H1 (cell line): ENCODE measurements at regions of chr18 and their contacts with region 1.

Region 1: GRCh38 chr18:46281185-46282176 is 177.3 kb downstream of the HAUS1 start:
- DNase-seq: peak; percentile 50 to 88
- H3K4me3 ChIP-seq: no peak overlapping the region
- H3K27ac ChIP-seq: no peak overlapping the region
- H3K4me1 ChIP-seq: peaks cover 6 to 9% (median 7%) of the 10 kb centered on the region in 4 experiments; a peak in 6 of 7 replicates
- H3K27me3 ChIP-seq: no peaks in the 10 kb centered on the region
- CTCF ChIP-seq: peak; percentile 76 to 95 (median 94)
- EP300 ChIP-seq: no peak
- POLR2A ChIP-seq: no peak
- RAD21 ChIP-seq: peak; percentile 92 to 93

Region 2: DNA sequence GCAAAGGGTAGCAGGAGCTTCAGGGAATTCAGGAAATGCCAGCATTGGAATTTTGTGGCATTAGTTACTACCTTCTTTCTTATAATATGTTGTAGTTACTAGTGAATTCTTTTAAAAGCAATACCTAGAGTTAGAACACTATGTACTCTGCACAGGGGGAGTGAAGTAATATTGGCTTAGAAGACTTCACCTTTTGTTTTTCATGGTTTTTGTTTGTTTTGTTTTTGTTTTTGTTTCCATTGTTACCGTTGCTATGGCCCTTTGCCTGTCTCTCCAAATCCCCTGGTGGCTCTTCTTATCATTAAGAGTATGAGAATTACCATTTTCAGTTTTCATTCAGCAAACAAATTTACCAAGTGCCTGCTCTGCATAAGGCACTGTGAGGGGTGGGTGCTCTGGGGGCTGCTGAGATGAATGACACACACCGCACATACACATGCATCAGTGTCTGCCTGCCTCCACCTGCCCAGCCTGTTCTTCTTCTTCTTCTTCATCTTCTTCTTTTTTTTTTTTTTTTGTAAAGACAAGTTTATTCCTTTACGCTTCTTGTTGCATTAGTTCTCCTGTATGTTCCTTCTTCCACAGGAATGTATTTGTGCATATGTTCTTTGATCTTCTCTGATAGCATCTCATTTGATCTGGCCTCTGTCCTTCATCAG is 17.1 kb before region 1 on chr18:
- CTCF ChIA-PET with region 1: interaction called, 23 read pairs
- POLR2A ChIA-PET with region 1: interaction called, 3 read pairs
- DNase-seq: no peak
- H3K4me3 ChIP-seq: peak overlapping the region in 1 of 4 experiments; percentile 23; a peak in 2 of 8 replicates
- H3K27ac ChIP-seq: peak overlapping the region; percentile 24; the same call in 1 of the 2 replicates
- H3K4me1 ChIP-seq: peaks cover 11 to 50% (median 35%) of the 10 kb centered on the region in 4 experiments
- H3K27me3 ChIP-seq: no peaks in the 10 kb centered on the region
- CTCF ChIP-seq: no peak
- EP300 ChIP-seq: peak in 1 of 2 experiments; percentile 87; a peak in 1 of 3 replicates
- POLR2A ChIP-seq: no peak
- RAD21 ChIP-seq: no peak

Region 3: DNA sequence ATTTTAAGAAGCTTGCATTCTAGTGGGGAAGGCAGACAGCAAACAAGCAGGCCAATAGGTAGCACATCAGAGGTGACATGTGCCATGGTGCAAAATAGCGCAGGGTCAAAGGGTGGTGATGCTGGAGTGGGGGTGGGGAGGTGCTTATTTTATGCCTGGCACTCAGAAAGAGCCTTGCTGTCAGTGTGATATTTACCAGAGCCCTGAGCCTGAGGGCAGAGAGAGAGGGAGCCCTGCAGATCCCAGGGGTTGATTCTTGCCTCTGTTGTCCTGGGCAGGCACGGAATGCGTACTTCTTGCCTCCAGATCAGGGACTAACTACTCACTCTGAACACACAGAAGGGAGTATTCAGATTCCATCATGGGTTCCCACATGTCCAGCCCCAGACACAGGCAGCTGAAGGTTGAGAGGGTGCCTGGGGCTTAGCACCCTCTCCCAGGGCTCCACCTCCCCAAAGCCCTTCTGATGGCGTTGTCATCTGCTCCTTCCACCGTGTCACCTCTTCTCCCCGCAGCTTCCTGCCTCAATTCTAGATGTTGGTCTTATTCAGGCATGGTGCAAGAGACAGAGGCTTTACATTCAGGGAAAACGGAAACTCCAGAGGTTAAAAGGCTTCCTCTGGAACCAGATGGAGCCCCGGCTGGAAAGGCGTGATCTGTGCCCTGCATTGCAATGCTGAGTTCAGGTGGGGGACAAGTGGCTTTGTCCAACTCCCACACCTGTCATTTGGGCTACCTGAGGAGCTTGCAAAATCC is 75.0 kb after region 1 on chr18:
- CTCF ChIA-PET with region 1: interaction called, 196 read pairs
- POLR2A ChIA-PET with region 1: interaction called, 4 read pairs
- DNase-seq: no peak
- H3K4me3 ChIP-seq: no peak overlapping the region
- H3K27ac ChIP-seq: no peak overlapping the region
- H3K4me1 ChIP-seq: peaks cover 0 to 4% (median 1%) of the 10 kb centered on the region in 4 experiments; a peak in 5 of 7 replicates
- H3K27me3 ChIP-seq: no peaks in the 10 kb centered on the region
- CTCF ChIP-seq: no peak
- EP300 ChIP-seq: no peak
- POLR2A ChIP-seq: no peak
- RAD21 ChIP-seq: no peak

Region 4: DNA sequence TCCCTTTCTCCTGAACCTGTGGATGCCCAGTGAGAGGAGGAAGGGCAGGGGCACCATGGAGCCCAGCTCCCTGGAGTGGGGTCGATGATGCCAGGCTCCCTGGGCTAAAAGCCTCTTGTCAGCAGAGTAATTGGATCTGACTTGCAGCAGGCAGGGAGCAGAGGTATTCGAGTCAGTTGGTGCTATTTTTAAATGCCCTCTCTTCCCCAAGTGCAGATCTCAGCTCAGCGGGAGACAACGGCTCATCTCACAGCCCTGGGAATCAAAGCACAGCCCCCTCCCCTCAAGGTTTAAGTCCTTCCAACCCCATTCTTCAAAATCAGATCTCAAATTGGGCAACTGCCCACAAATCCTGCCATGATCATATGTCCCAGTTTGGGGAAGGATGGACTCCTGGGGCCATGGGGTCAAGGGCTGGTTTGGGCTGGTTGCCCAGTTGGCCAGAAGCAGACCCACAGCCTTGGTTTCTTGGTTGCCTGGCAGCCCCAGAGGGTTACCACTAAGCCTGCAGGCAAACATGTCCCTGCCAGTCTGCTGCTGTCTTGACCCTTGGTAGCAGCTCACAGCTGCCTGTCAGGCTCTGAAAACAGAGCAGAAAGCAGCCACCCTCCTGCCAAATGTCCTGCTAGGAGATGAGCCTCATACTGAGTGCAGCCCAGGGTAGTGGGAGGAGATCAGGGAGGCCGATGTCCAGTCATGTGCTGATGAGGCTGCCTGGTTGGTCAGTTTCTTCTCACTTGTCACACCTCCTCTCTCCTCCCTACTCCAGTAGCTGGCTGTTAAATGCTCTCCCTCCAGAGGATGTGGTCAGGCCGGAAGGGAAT is 130.6 kb after region 1 on chr18:
- CTCF ChIA-PET with region 1: interaction called, 31 read pairs
- POLR2A ChIA-PET with region 1: no interaction called
- DNase-seq: no peak
- H3K4me3 ChIP-seq: no peak overlapping the region; a peak in 1 of 8 replicates
- H3K27ac ChIP-seq: no peak overlapping the region
- H3K4me1 ChIP-seq: peaks cover 20 to 38% (median 26%) of the 10 kb centered on the region in 4 experiments
- H3K27me3 ChIP-seq: no peaks in the 10 kb centered on the region; a peak in 2 of 7 replicates
- CTCF ChIP-seq: no peak
- EP300 ChIP-seq: no peak
- POLR2A ChIP-seq: no peak
- RAD21 ChIP-seq: no peak

Region 5: DNA sequence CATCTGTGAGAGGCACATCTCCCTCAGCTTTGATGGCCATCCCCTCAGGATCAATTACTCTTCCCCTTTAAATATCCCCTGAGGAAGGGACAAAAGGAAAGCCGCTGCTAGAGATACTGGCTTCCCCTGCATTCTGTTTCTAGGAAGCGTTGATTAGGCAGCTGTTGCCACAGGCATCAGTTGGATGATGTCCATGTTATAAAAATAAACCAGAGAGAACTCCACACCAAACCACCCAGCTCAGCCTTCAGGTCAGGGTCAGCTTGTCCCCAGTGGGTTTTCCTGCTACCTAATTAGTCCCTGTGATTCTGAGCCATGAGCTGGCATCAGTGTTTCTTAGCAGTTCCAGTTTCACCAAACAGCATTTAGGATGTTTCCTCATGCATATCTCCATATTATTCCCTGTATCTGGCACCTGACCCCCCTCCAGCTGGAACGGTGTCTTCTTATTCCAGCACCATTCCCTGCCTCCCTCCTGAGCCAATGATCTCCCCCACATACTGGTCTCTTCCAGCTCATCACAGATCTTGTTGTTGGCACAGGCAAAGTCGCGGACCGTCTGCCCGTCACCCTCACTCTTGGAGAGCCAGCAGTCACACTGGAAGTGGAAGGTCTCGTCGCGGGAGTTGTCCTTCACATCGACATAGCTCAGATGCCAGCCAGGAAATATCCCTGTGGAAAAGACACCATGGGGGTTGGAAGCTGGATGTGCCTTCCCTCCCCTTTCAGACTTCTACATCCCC is 207.2 kb after region 1 on chr18:
- CTCF ChIA-PET with region 1: interaction called, 66 read pairs
- POLR2A ChIA-PET with region 1: no interaction called
- DNase-seq: no peak
- H3K4me3 ChIP-seq: no peak overlapping the region
- H3K27ac ChIP-seq: no peak overlapping the region
- H3K4me1 ChIP-seq: peaks cover 0 to 10% (median 7%) of the 10 kb centered on the region in 4 experiments; a peak in 5 of 7 replicates
- H3K27me3 ChIP-seq: peaks cover 0 to 3% (median 1%) of the 10 kb centered on the region in 4 experiments; a peak in 1 of 7 replicates
- CTCF ChIP-seq: no peak
- EP300 ChIP-seq: no peak
- POLR2A ChIP-seq: no peak
- RAD21 ChIP-seq: no peak

Region 6: DNA sequence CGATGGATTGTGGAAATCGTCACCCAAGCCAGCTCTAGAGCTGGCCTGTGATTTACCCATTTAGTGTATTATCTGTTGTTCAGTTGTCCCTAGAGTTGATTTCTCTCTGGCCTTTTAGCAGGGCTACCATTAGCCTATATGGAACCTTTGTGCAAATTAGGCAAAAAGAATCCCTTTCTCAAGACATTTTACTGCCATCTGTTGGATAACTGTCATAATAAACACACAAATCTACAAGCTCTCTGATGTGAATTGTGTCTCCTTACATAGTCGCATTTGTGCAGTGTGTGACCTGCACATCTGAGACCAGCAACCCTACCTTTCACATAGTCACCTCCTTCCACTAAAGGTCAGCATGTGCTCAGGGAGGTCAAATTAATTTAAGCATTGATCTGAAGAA is 341.5 kb after region 1 on chr18:
- CTCF ChIA-PET with region 1: interaction called, 26 read pairs
- POLR2A ChIA-PET with region 1: no interaction called
- DNase-seq: no peak
- H3K4me3 ChIP-seq: no peak overlapping the region
- H3K27ac ChIP-seq: no peak overlapping the region
- H3K4me1 ChIP-seq: peaks cover 0 to 3% (median 0%) of the 10 kb centered on the region in 4 experiments; a peak in 1 of 7 replicates
- H3K27me3 ChIP-seq: no peaks in the 10 kb centered on the region
- CTCF ChIP-seq: peak in 2 of 3 experiments; percentile 4 to 19; a peak in 2 of 4 replicates
- EP300 ChIP-seq: no peak
- POLR2A ChIP-seq: no peak
- RAD21 ChIP-seq: peak; percentile 41 to 47